HCT116 (cell line): ENCODE measurements at regions of chr3 and their contacts with region 1.

Region 1: GRCh38 chr3:41716471-41716870 is 245.4 kb downstream of the ULK4 start:
- DNase-seq: no peak
- ATAC-seq: no peak
- H3K4me3 ChIP-seq: no peak overlapping the region
- H3K27ac ChIP-seq: no peak overlapping the region
- H3K4me1 ChIP-seq: no peaks in the 10 kb centered on the region
- H3K27me3 ChIP-seq: no peaks in the 10 kb centered on the region
- CTCF ChIP-seq: peak in 2 of 3 experiments; percentile 11 to 26; a peak in 2 of 6 replicates
- POLR2A ChIP-seq: no peak
- RAD21 ChIP-seq: peak; percentile 49

Region 2: DNA sequence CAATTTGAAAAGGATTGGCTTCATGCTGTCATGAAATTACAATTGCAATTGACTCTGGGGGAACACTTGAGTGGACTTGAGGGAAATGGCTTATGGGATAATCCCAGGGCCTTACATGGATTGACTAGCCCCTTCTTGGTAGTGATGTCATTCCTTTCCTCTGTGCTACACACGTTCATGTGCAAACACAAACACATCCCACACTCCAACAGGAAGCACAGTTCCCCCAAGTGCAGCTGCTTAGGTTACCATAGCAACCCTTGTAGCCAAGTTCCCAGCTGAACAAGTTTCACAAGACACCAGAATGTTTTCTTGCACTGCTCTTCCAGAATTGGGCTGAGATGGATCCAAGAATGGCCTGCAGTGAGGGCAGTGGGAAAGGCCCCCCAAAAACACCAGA is 974.7 kb before region 1 on chr3:
- CTCF ChIA-PET with region 1: no interaction called
- POLR2A ChIA-PET with region 1: no interaction called
- RAD21 ChIA-PET with region 1: no interaction called
- intact Hi-C with region 1: no loop called
- DNase-seq: no peak
- ATAC-seq: no peak
- H3K4me3 ChIP-seq: no peak overlapping the region
- H3K27ac ChIP-seq: no peak overlapping the region
- H3K4me1 ChIP-seq: no peaks in the 10 kb centered on the region
- H3K27me3 ChIP-seq: 0 out of 2 replicates have a peak, but pooled peaks cover 12% of the 10 kb centered on the region
- CTCF ChIP-seq: no peak
- POLR2A ChIP-seq: no peak
- RAD21 ChIP-seq: no peak

Region 3: GRCh38 chr3:41726891-41727290 is 10.4 kb after region 1 on chr3:
- CTCF ChIA-PET with region 1: no interaction called
- POLR2A ChIA-PET with region 1: no interaction called
- RAD21 ChIA-PET with region 1: no interaction called
- intact Hi-C with region 1: no loop called
- DNase-seq: no peak
- ATAC-seq: no peak
- H3K4me3 ChIP-seq: no peak overlapping the region
- H3K27ac ChIP-seq: no peak overlapping the region
- H3K4me1 ChIP-seq: no peaks in the 10 kb centered on the region
- H3K27me3 ChIP-seq: no peaks in the 10 kb centered on the region
- CTCF ChIP-seq: no peak
- POLR2A ChIP-seq: no peak
- RAD21 ChIP-seq: no peak

Region 4: GRCh38 chr3:42090973-42091731 is 374.7 kb after region 1 on chr3 and contains the start of gene TRAK1:
- CTCF ChIA-PET with region 1: no interaction called
- POLR2A ChIA-PET with region 1: no interaction called
- RAD21 ChIA-PET with region 1: no interaction called
- intact Hi-C with region 1: loop called (anchors 10 kb)
- DNase-seq: no peak
- ATAC-seq: no peak
- H3K4me3 ChIP-seq: no peak within 1 kb of the TSS
- H3K27ac ChIP-seq: no peak within 1 kb of the TSS
- H3K4me1 ChIP-seq: peaks cover 4 to 6% of the 10 kb centered on the region in 2 experiments
- H3K27me3 ChIP-seq: no peaks in the 10 kb centered on the region
- CTCF ChIP-seq: no peak
- POLR2A ChIP-seq: no peak
- RAD21 ChIP-seq: no peak
- total RNA-seq, gene TRAK1: 25.9 TPM